Activated T-helper 1 cell treated with anti-CD3 and anti-CD28 coated beads, Interleukin-12 subunit alpha, Interleukin-12 subunit beta, Interleukin-2, Interleukin-4 antibody, amounts not matched to agents 30 ng/mL and 10 ng/mL and 1 ng/mL, durations not matched to agents 14 hours and 24 hours and 36 hours (primary cell): ENCODE measurements at regions of chr13 and their contacts with region 1.

Region 1: DNA sequence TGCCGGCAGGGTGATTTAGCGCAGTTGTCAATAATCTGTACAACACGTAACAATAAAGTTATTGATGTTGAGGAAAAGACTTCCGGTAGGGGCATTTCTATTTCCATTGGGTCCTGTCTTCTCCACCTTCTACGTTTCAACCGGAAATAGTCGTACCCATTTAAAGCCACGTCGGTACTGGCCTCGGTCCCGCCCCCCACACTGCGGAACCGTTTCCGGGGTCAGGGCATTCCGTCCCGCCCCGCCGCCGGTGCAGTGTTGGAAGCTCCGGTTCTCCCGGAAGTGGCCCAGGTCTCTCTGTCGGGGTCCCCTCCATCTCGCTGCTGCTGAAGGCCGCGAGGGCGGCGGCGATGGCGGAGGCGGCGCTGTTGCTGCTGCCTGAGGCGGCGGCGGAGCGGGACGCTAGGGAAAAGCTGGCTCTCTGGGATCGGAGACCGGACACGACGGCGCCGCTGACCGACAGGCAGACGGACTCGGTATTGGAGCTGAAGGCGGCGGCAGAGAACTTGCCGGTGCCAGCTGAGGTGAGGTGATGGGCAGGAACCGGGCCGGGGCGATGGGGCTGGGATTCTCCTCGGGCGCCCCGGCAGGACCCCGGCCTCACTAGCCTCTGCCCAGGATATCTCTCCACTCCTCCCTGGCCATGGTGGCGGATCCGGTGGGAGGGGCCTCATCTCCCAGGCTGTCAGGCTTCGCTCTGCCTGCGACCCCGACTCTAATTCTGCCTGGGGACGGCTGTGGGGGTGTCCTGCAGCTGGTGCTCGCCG is at the start of gene COG3:
- DNase-seq: peak; percentile 94
- H3K4me3 Mint-ChIP-seq: peak within 1 kb of the TSS; percentile 95
- H3K27ac Mint-ChIP-seq: peak within 1 kb of the TSS; percentile 79
- H3K4me1 Mint-ChIP-seq: peaks cover 43% of the 10 kb centered on the region
- H3K27me3 Mint-ChIP-seq: peaks cover 11% of the 10 kb centered on the region
- total RNA-seq, gene COG3: 22.9 and 23.2 TPM in 2 replicates

Region 2: GRCh38 chr13:44988973-44989817 is 475.7 kb before region 1 on chr13 and contains the starts of genes GPALPP1 and NUFIP1:
- intact Hi-C with region 1: loop called (anchors 1 kb)
- DNase-seq: peak; percentile 90
- H3K4me3 Mint-ChIP-seq: peak within 1 kb of the TSS; percentile 91
- H3K27ac Mint-ChIP-seq: peak within 1 kb of the TSS; percentile 91
- H3K4me1 Mint-ChIP-seq: peaks cover 43% of the 10 kb centered on the region
- H3K27me3 Mint-ChIP-seq: no peaks in the 10 kb centered on the region
- total RNA-seq, gene GPALPP1: 29.8 and 33.5 TPM in 2 replicates
- total RNA-seq, gene NUFIP1: 12.2 and 13.5 TPM in 2 replicates

Region 3: DNA sequence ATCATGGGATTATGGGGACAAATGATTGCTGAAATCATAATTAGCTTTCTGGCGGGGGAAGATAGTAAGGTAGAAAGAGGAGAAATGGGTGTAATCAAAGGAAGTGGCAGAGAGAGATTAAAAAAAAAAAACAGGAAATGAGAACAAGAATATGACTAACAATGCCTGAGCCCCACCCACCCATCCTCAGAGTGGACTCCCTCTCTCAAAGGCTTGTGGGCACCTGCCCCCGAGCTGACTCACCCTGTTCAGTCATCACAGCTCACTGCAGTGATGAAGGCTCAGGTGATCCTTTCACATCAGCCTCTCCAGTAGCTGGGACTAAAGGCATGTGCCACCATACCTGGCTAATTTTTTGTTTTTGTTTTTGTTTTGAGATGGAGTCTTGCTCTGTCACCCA is 97.5 kb before region 1 on chr13:
- intact Hi-C with region 1: loop called (anchors 1 kb)
- DNase-seq: peak; percentile 86
- H3K4me3 Mint-ChIP-seq: peak overlapping the region; percentile 64
- H3K27ac Mint-ChIP-seq: peak overlapping the region; percentile 91
- H3K4me1 Mint-ChIP-seq: peaks cover 55% of the 10 kb centered on the region
- H3K27me3 Mint-ChIP-seq: no peaks in the 10 kb centered on the region

Region 4: DNA sequence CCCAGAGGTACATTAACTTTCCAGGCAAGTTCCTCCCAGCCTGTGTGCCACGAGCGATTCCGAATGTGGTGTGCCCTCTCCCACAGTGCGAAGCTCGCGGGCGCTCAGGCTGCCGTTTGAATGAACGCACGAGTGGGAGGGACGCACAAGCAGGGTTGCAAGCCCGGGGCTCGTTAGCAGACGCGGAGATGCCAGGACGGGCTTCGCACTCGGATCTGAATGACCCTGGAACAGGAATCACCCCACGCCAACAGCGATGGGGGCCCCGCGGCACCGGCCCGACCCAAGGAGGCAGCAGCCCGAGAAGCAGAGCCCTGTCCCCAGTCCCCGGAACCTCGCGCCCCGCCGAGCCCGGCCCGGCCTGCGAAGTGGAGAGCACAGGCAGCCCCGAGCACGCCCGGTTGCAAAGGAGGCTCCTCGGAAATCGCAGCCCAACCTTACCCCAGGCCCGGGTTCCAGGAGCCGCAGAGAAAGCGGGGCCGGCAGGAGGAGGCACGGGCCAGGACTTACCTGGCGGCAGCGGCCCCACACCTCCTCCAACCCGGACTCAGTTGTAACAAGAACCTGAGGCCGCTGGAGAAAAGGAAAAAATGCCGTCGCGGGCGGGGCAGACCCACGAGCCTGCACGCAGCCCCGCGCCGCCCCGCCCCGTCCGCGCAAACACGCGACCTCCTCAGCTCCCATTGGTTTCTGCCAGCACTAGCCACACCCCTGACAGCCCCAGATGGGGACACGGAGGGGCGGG is 46.9 kb before region 1 on chr13 and contains the start of gene SLC25A30:
- intact Hi-C with region 1: loop called (anchors 1 kb)
- DNase-seq: peak; percentile 85
- H3K4me3 Mint-ChIP-seq: peak within 1 kb of the TSS; percentile 94
- H3K27ac Mint-ChIP-seq: peak within 1 kb of the TSS; percentile 92
- H3K4me1 Mint-ChIP-seq: peaks cover 18% of the 10 kb centered on the region
- H3K27me3 Mint-ChIP-seq: no peaks in the 10 kb centered on the region
- total RNA-seq, gene SLC25A30: 16.0 and 16.3 TPM in 2 replicates

Region 5: DNA sequence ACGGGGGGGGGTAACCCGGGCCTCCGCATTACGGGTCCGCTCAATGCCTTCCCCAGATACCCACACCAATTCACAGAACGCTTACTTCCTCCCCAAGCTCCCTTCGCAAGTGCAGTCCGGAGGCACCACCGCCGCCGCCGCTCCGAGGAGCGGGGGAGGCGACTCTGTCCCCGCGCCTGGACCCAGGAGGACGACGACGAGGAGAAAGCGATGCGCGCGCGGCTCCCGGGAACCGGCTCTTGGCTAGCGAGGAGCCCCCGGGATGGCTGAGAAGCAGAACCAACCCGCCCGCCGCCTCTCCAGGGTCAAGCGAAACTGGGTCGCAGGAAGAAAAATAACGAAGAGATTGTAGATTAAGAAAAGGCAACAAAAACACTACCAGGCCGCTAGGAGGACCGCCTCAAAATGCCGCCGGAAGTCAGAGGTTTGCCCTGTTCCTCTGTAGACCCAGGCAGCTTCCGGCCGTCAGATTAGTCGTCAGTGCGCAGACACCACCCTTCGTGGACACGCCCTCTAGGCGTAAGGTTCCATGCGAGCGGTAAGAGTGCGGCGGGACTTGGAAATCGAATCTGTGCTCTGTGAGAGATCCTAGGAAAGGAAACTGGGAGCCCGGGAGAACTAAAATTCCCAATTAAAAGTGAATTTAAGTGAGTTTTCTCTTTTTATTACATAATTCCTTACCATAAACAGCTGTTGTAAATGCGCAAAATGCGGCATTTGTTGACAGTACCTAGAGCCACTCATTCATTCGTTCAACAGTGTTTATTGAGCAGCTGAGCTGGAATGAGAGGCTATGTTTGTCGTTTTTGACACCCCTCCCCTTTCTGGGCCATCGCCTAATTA is 587.7 kb after region 1 on chr13 and contains the start of gene ZC3H13:
- intact Hi-C with region 1: loop called (anchors 2 kb)
- DNase-seq: peak; percentile 89
- H3K4me3 Mint-ChIP-seq: peak within 1 kb of the TSS; percentile 93
- H3K27ac Mint-ChIP-seq: peak within 1 kb of the TSS; percentile 94
- H3K4me1 Mint-ChIP-seq: peaks cover 40% of the 10 kb centered on the region
- H3K27me3 Mint-ChIP-seq: peaks cover 15% of the 10 kb centered on the region
- total RNA-seq, gene ZC3H13: 52.0 and 59.4 TPM in 2 replicates